ENCODE measurements at regions of chr1 and their contacts with region 1.

Region 1: GRCh38 chr1:13662493-13662892 is 37.5 kb upstream of the PRDM2 start:
- DNase-seq: no peak

Region 2: DNA sequence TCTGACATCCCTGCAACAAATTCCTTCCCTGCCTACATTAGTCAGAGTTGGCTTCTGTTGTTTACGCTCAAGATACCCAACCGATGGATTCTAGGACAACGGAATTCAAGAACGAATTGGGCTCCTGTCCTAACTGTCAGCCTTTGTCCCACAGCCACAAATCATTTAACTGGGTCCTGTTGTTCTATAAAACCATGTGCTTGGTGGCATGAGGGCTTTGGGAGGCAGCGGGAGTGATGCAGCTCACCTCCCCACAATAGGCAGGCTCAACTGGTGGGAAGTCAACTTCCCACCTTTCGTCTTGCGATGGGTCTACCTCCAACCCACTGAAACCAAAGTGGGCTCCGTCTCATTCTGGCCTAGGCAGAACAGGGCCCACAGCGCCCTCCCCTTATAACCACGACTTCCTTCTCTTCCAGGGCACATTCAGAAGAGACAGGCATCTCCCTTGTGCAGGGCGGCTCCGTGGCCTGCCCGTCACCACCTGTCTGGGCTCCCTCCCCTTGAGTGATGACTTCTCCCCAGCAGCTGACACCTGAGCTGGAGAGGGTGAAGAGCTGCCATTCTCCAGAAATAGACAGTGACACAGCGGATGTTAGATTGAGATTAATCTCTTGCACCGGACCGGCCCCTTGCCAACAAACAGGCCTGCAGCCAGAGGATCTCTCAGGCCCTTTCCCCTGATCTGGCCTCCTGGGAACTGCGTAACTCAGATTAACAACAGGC is 175.2 kb before region 1 on chr1:
- intact Hi-C with region 1: no loop called
- DNase-seq: no peak

Region 3: DNA sequence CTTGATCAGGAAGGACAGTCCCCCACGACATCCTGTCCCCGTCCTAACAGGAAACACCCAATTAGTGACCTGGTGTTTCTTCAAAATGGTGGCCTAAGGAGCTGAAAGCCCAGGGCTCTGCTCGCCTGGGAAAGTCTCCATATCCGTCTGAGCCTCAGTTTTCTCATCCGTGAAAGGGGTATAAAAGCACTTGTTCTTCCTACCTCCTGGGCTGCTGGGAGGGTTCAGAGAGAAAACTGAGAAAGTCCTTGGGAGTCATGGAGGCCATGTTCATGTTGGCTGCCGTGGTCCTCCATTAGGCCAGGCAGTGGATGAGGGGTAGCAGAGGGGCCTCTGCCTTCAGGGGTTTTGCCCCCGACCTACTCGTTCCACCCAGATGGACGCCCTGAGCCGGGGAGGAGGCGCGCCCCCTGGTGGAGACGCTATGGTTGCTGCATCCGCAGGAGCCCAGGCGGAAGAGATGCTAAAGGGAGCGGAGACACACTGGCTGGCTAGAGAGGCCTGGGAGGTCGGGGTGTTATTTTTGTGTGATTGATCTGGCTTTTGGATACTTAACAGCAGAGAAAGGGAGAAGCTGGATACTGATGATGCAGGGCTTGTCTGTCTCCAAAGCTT is 151.0 kb after region 1 on chr1:
- intact Hi-C with region 1: loop called in 1 of 2 experiments (anchors 10 kb)
- DNase-seq: no peak

Measured in posterior vena cava (tissue), 2 donors.